ENCODE measurements at regions of chr3 and their contacts with region 1.

Region 1: GRCh38 chr3:184513276-184514170 is 48.1 kb upstream of the EPHB3 start:
- DNase-seq: peak; percentile 82
- ATAC-seq: peak; percentile 99
- H3K4me3 ChIP-seq: peak overlapping the region; percentile 60
- H3K27ac ChIP-seq: no peak overlapping the region
- H3K4me1 ChIP-seq: no peaks in the 10 kb centered on the region
- H3K27me3 ChIP-seq: peaks cover 96% of the 10 kb centered on the region
- CTCF ChIP-seq: peak; percentile 79

Region 2: GRCh38 chr3:184003187-184003967 is 510.1 kb before region 1 on chr3:
- CTCF ChIA-PET with region 1: no interaction called
- POLR2A ChIA-PET with region 1: no interaction called
- intact Hi-C with region 1: no loop called
- DNase-seq: peak; percentile 75
- ATAC-seq: no peak
- H3K4me3 ChIP-seq: no peak overlapping the region
- H3K27ac ChIP-seq: peak overlapping the region; percentile 12
- H3K4me1 ChIP-seq: peaks cover 48% of the 10 kb centered on the region
- H3K27me3 ChIP-seq: no peaks in the 10 kb centered on the region
- CTCF ChIP-seq: no peak

Region 3: GRCh38 chr3:184298759-184299496 is 214.6 kb before region 1 on chr3 and contains the start of gene PSMD2:
- CTCF ChIA-PET with region 1: no interaction called
- POLR2A ChIA-PET with region 1: no interaction called
- intact Hi-C with region 1: no loop called
- DNase-seq: peak; percentile 97
- ATAC-seq: peak; percentile 89
- H3K4me3 ChIP-seq: peak within 1 kb of the TSS; percentile 100
- H3K27ac ChIP-seq: peak within 1 kb of the TSS; percentile 80
- H3K4me1 ChIP-seq: peaks cover 20% of the 10 kb centered on the region
- H3K27me3 ChIP-seq: no peaks in the 10 kb centered on the region
- CTCF ChIP-seq: no peak
- total RNA-seq, gene PSMD2: 1,057 and 1,393 TPM in 2 replicates

Region 4: GRCh38 chr3:184417619-184418327 is 95.8 kb before region 1 on chr3:
- CTCF ChIA-PET with region 1: no interaction called
- POLR2A ChIA-PET with region 1: no interaction called
- intact Hi-C with region 1: loop called (anchors 5 kb)
- DNase-seq: peak; percentile 69
- ATAC-seq: peak; percentile 96
- H3K4me3 ChIP-seq: no peak overlapping the region
- H3K27ac ChIP-seq: no peak overlapping the region
- H3K4me1 ChIP-seq: no peaks in the 10 kb centered on the region
- H3K27me3 ChIP-seq: 0 out of 2 replicates have a peak, but pooled peaks cover 2% of the 10 kb centered on the region
- CTCF ChIP-seq: peak; percentile 89

Region 5: GRCh38 chr3:184469423-184469822 is 44.1 kb before region 1 on chr3:
- CTCF ChIA-PET with region 1: interaction called, 5 read pairs
- POLR2A ChIA-PET with region 1: no interaction called
- intact Hi-C with region 1: loop called (anchors 1 kb)
- DNase-seq: peak; percentile 66
- ATAC-seq: peak; percentile 85
- H3K4me3 ChIP-seq: no peak overlapping the region
- H3K27ac ChIP-seq: no peak overlapping the region
- H3K4me1 ChIP-seq: no peaks in the 10 kb centered on the region
- H3K27me3 ChIP-seq: peaks cover 36% of the 10 kb centered on the region
- CTCF ChIP-seq: peak; percentile 93